ENCODE measurements at regions of chr2 and their contacts with region 1.

Region 1: DNA sequence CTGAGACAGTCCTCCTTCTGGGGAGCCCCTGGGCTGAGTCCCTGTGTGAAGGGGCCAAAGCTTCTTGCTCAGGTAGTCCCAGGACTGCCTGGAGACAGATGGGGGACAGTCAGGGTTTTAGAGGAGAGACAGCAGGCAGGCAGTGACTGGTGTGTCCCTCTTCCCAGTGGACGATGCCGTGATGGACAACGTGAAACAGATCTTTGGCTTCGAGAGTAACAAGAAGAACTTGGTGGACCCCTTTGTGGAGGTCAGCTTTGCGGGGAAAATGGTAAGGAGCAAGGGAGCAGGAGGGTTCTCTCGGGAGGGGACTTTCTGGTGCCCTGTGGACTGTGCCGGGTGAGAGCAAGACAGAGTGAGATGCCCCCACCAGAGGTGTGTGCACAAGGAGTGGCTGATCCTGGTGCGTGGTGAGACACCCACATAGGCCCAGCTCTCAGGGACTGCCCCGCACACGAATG is 74.8 kb downstream of the DYSF start:
- DNase-seq: no peak
- H3K4me3 ChIP-seq: no peak overlapping the region
- CTCF ChIP-seq: no peak

Region 2: GRCh38 chr2:71299507-71299906 is 228.7 kb before region 1 on chr2:
- in situ Hi-C with region 1: loop called (anchors 5 kb)
- DNase-seq: peak; percentile 31
- H3K4me3 ChIP-seq: no peak overlapping the region
- CTCF ChIP-seq: peak; percentile 56

Region 3: DNA sequence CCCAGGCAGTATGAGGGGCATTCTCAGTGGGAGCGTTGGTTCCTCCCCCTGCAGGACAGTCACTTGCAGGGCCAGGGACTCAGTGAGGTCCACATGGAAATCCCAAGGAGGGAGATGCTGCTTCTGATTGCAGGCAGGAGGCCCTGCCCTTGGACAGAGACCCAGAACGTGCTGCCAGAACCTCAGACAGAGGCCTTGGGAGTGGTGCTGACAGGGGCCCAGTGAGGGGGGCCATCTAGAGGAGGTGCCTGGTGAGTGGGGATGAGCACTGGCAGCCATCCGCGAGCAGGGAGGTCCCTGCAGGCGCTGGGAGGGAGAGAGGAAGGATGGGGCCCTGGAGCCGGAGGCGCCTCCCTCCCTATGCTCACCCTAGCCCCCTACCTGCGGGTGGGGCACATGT is 58.3 kb after region 1 on chr2:
- in situ Hi-C with region 1: loop called (anchors 5 kb)
- DNase-seq: no peak
- H3K4me3 ChIP-seq: no peak overlapping the region
- CTCF ChIP-seq: no peak

Measured in astrocyte of the cerebellum (primary cell).